Prostate gland (tissue), 2 donors: ENCODE measurements at regions of chr7 and their contacts with region 1.

Region 1: GRCh38 chr7:99990460-99990852 is 14.6 kb upstream of the AZGP1 start:
- DNase-seq: no peak
- H3K4me3 ChIP-seq: no peak overlapping the region
- H3K27ac ChIP-seq: no peak overlapping the region
- H3K4me1 ChIP-seq: no peaks in the 10 kb centered on the region
- H3K27me3 ChIP-seq: no peaks in the 10 kb centered on the region
- CTCF ChIP-seq: no peak
- POLR2A ChIP-seq: no peak

Region 2: DNA sequence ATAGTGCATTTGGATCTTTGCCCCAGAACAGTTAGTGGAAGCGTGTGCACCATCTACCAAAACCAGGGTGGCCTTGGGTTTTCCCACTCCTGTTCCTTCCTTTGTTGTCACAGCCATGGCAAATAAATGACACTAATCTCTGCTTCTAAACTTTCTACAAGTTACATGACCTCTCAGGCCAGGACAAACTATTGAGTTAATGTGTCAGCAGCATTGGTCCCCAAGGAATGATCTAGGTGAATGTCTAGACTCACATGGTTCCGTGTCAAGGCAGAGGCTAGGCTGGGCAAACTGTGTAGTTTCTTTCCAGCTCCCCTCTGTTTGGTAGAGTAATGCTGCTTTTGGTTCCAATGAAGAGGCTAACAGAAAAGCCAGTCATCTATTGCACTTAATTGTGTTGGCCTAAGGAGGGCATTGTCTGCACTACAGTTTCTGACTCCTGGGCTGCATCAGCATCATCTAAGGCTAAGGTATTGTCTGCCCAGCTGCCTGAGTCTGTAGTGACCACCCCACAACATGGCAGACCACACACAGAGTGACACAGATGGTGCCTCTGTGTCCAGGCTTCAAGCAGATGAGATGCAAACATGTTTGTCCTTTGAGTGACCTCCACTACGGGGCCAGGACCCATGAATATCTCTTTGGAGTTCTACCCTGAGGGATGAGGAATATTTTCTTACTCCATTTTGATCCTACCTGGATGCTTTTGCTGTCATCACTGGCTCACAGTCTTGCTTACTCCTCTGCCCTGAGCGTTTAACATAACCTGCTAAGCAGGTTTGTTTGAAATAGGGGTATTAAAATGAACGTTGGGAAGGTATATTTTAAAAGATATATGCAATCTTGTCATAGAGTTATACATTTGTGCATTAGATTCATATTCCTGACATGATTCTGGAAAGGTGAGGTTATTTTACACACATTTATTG is 208.2 kb before region 1 on chr7:
- intact Hi-C with region 1: no loop called
- DNase-seq: no peak
- H3K4me3 ChIP-seq: no peak overlapping the region
- H3K27ac ChIP-seq: no peak overlapping the region
- H3K4me1 ChIP-seq: no peaks in the 10 kb centered on the region
- H3K27me3 ChIP-seq: no peaks in the 10 kb centered on the region
- CTCF ChIP-seq: no peak
- POLR2A ChIP-seq: no peak

Region 3: GRCh38 chr7:99910976-99911375 is 79.5 kb before region 1 on chr7:
- intact Hi-C with region 1: loop called (anchors 5 kb)
- DNase-seq: no peak
- H3K4me3 ChIP-seq: no peak overlapping the region
- H3K27ac ChIP-seq: no peak overlapping the region
- H3K4me1 ChIP-seq: no peaks in the 10 kb centered on the region
- H3K27me3 ChIP-seq: no peaks in the 10 kb centered on the region
- CTCF ChIP-seq: no peak
- POLR2A ChIP-seq: no peak

Region 4: DNA sequence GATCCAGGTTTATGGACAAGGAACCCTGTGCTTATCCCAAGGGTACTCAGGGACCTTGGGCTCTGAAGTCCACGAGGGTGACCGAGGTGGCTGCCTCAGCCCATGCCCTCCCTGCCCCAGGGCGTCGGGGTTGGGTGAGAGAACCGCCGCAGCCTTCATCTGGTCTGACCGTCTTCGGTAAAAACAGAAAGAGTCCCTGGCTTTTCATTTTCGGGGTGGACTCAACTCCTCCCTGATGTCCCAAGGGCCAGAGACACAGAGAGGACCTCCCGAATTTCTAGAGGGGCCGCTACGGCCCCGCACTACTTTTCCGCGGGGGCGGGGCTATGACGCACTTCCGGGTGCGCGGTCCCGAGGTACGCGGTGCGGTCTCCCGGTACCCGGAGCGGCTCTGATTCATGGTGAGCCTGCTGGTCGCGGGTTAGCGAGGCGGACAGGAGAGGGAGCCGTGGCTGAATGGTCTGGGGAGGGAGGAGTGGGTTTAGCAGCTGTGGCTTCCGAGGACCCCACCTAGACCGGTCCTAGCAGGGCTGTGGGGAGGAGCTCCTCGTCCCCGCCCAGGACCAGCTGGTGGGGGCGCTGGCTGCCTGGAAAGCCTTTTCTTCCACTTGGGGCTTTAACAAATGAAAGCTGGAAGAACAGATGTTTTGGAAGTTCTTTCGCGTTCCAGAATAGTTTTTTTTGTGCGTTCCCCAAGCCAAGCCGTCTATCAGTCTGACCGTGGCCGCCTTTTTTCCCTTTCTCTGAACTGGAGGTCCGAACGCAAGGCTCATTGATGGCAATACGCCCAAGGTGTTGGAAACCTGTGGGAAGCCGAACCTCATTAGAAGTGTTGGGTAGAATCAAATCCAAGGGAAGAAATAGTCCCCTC is 59.2 kb after region 1 on chr7 and contains the start of gene ZSCAN21:
- intact Hi-C with region 1: loop called (anchors 5 kb)
- DNase-seq: peak; percentile 77
- H3K4me3 ChIP-seq: peak within 1 kb of the TSS; percentile 59 to 82
- H3K27ac ChIP-seq: peak within 1 kb of the TSS; percentile 93 to 99
- H3K4me1 ChIP-seq: no peaks in the 10 kb centered on the region
- H3K27me3 ChIP-seq: no peaks in the 10 kb centered on the region
- CTCF ChIP-seq: peak in 3 of 4 experiments; percentile 14 to 37 (median 30)
- POLR2A ChIP-seq: peak; percentile 67
- total RNA-seq, gene ZSCAN21: 24.6 to 38.0 TPM